Activated CD4-positive, alpha-beta T cell treated with anti-CD3 and anti-CD28 coated beads, Interleukin-2, amount 10 ng/mL, durations not matched to agents 24 days and 14 days (primary cell): ENCODE measurements at regions of chr2 and their contacts with region 1.

Region 1: GRCh38 chr2:68467077-68467960 is at the starts of genes APLF and FBXO48:
- DNase-seq: peak; percentile 100
- H3K4me3 Mint-ChIP-seq: peak within 1 kb of the TSS; percentile 96
- H3K27ac Mint-ChIP-seq: peak within 1 kb of the TSS; percentile 93
- H3K4me1 Mint-ChIP-seq: peaks cover 44% of the 10 kb centered on the region
- H3K27me3 Mint-ChIP-seq: no peaks in the 10 kb centered on the region
- total RNA-seq, gene APLF: 2.0 and 2.1 TPM in 2 replicates
- total RNA-seq, gene FBXO48: 1.2 TPM in 2 replicates

Region 2: GRCh38 chr2:68157402-68158133 is 309.8 kb before region 1 on chr2 and contains the start of gene PNO1:
- intact Hi-C with region 1: loop called (anchors 1 kb)
- DNase-seq: peak; percentile 99
- H3K4me3 Mint-ChIP-seq: peak within 1 kb of the TSS; percentile 98
- H3K27ac Mint-ChIP-seq: peak within 1 kb of the TSS; percentile 99
- H3K4me1 Mint-ChIP-seq: peaks cover 26% of the 10 kb centered on the region
- H3K27me3 Mint-ChIP-seq: no peaks in the 10 kb centered on the region
- total RNA-seq, gene PNO1: 35.4 and 38.4 TPM in 2 replicates

Region 3: GRCh38 chr2:68441179-68441993 is 25.9 kb before region 1 on chr2:
- intact Hi-C with region 1: loop called (anchors 1 kb)
- DNase-seq: peak; percentile 94
- H3K4me3 Mint-ChIP-seq: peak overlapping the region; percentile 49
- H3K27ac Mint-ChIP-seq: peak overlapping the region; percentile 46
- H3K4me1 Mint-ChIP-seq: peaks cover 23% of the 10 kb centered on the region
- H3K27me3 Mint-ChIP-seq: peaks cover 17% of the 10 kb centered on the region

Region 4: GRCh38 chr2:68653538-68653982 is 186.2 kb after region 1 on chr2:
- intact Hi-C with region 1: loop called (anchors 1 kb)
- DNase-seq: peak; percentile 88
- H3K4me3 Mint-ChIP-seq: peak overlapping the region; percentile 66
- H3K27ac Mint-ChIP-seq: peak overlapping the region; percentile 71
- H3K4me1 Mint-ChIP-seq: peaks cover 46% of the 10 kb centered on the region
- H3K27me3 Mint-ChIP-seq: peaks cover 36% of the 10 kb centered on the region

Region 5: GRCh38 chr2:68766376-68766845 is 299.1 kb after region 1 on chr2:
- intact Hi-C with region 1: loop called (anchors 2 kb)
- DNase-seq: peak; percentile 92
- H3K4me3 Mint-ChIP-seq: peak overlapping the region; percentile 76
- H3K27ac Mint-ChIP-seq: peak overlapping the region; percentile 95
- H3K4me1 Mint-ChIP-seq: peaks cover 86% of the 10 kb centered on the region
- H3K27me3 Mint-ChIP-seq: no peaks in the 10 kb centered on the region

Region 6: DNA sequence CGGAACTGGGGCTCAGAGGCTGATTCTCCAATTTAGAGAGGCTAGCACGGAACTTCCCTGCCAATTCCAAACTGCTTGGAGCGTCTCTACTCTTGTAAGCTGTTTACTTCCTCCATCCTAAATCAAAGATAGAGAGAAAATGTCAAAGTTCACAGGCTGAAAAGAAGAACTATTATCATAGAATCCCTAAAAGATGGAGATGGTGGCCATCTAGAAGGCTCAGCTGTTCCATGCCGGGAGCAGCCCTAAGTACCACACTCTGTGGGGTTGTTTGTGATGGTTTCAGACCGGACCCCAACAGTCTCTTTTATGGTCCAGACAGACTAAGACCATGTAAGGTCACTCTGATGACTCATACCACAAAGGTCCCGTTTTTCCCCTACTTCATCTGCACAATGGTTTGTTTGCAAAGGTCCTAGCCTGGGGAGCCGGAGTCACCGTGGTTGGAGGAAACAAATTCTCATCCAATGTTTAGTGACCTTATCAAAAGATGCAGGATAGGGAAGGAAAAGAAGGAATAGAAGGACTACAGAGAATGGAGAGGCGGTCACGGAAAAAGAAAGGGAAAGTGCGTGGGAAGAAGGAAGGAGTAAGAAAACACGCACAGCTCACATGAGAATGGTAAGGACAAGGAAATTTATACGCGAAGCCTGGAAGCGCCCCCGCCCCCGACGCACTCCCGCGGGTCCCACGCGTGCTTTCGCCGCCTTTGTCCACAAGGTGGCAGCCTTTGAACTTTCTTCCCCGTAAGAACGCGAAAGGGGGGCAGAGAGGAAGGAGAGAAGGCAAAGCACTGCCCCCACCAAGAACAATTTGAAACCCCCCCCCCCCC is 545.2 kb after region 1 on chr2:
- intact Hi-C with region 1: loop called (anchors 5 kb)
- DNase-seq: peak; percentile 83
- H3K4me3 Mint-ChIP-seq: peak overlapping the region; percentile 74
- H3K27ac Mint-ChIP-seq: no peak overlapping the region
- H3K4me1 Mint-ChIP-seq: peaks cover 12% of the 10 kb centered on the region
- H3K27me3 Mint-ChIP-seq: peaks cover 76% of the 10 kb centered on the region